Posterior cingulate gyrus (tissue), 11 donors: ENCODE measurements at regions of chr12 and their contacts with region 1.

Region 1: DNA sequence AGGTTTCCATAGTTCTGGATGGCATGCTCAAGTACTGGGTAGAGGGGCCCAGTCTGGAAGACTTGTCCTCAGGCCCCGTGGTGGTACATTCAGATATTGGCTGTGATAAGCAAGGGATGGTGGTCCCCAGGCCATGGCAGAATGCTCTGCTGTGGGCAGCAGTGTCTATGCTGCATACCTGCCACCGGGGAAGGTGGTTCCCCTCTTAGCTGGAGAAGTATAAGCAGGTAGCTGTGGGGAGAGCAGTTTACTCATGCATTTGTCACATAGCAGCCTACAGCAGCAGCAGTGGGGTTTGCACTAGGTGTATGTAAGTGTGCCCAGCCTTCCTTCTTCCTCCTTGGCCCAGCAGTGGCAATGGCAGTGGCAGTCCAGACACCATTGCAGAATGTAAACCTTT is 69.3 kb upstream of the ADAMTS20 start:
- DNase-seq: no peak

Region 2: GRCh38 chr12:43325786-43326185 is 295.5 kb before region 1 on chr12:
- intact Hi-C with region 1: no loop called
- DNase-seq: no peak

Region 3: DNA sequence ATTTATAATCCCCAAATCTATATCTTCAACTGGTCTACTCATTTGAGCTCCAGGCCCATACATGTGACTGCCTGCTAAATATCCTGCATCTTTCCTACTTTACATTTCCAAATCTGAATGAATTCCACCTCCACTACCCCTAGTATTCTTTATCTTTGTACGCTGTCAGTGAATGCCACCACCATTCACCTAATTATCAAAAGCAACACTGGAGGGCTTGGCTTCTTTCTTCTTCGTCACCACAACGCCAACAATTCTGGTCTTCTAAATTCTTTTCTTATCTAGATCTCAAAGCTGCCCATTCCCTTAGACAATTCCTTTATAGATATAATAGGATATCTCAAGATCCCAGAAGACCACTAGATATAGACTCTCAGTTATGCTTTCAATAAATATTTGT is 22.2 kb before region 1 on chr12:
- intact Hi-C with region 1: no loop called
- DNase-seq: no peak

Region 4: DNA sequence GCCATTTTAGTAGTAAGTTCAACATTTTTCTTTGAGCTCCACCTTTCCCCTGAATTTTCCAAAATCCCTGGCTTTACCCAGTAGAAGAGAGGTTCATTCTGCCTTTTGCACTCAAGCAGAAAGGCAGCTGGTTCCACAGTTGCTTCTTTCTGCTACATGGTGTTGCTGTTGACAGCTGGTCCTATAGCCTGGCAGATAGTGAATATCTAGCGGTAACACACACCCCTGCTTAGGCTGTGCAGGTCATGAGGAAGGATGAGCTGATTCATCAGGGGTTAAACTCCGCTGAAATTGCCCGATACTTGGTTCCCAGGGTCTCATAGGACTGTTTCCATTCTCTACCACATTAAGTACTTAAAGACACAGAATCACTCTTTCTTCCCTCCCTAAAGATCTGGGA is 74.9 kb after region 1 on chr12:
- intact Hi-C with region 1: loop called (anchors 2 kb)
- DNase-seq: no peak

Region 5: GRCh38 chr12:43812906-43813305 is 191.6 kb after region 1 on chr12:
- intact Hi-C with region 1: no loop called
- DNase-seq: no peak